ENCODE measurements at regions of chr9 and their contacts with region 1.

Region 1: DNA sequence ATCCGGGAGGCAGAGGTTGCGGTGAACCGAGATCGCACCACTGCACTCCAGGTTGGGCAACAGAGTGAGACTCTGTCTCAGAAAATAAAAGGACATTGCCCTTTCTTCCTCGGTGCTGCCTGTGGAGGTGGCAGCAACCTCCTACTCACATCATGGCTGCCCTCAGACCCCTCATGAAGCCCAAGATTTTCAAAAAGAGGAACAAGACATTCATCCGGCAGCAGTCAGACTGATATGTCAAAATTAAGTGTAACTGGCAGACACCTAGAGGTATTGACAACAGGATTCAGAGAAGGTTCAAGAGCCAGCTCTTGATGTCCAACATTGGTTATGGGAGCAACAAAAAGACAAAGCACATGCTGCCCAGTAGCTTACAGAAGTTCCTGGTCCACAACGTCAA is 12.6 kb upstream of the PAX5 start:
- DNase-seq: no peak
- ATAC-seq: no peak
- H3K4me3 ChIP-seq: no peak overlapping the region
- H3K27ac ChIP-seq: no peak overlapping the region
- H3K4me1 ChIP-seq: no peaks in the 10 kb centered on the region
- H3K27me3 ChIP-seq: peaks cover 7 to 15% of the 10 kb centered on the region in 2 experiments; a peak in 3 of 5 replicates
- CTCF ChIP-seq: no peak
- EP300 ChIP-seq: no peak
- POLR2A ChIP-seq: no peak
- RAD21 ChIP-seq: no peak

Region 2: DNA sequence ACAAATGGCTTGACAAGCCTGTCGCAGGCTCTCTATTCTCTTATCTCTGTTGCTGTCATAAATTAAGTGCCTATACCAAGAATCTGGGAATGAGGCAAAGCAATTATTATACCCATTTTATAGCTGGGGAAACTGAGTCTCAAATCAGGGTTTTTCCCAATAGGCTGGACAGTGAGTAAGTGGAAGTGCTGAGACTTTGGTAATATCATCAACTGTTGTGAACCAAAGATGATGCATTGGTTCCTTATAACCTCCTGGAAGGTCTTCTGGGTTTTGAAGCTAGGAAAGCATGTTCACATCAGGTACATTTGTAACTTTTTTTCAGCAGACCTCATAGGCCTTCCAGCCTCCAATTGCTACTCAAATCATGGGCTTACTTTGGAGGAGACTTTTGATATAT is 48.1 kb after region 1 on chr9:
- CTCF ChIA-PET with region 1: no interaction called
- POLR2A ChIA-PET with region 1: no interaction called
- in situ Hi-C with region 1: loop called (anchors 5 kb)
- intact Hi-C with region 1: no loop called
- DNase-seq: no peak
- ATAC-seq: no peak
- H3K4me3 ChIP-seq: no peak overlapping the region
- H3K27ac ChIP-seq: no peak overlapping the region
- H3K4me1 ChIP-seq: no peaks in the 10 kb centered on the region
- H3K27me3 ChIP-seq: no peaks in the 10 kb centered on the region
- CTCF ChIP-seq: no peak
- EP300 ChIP-seq: no peak
- POLR2A ChIP-seq: no peak
- RAD21 ChIP-seq: no peak